A673 (cell line): ENCODE measurements at regions of chr2 and their contacts with region 1.

Region 1: DNA sequence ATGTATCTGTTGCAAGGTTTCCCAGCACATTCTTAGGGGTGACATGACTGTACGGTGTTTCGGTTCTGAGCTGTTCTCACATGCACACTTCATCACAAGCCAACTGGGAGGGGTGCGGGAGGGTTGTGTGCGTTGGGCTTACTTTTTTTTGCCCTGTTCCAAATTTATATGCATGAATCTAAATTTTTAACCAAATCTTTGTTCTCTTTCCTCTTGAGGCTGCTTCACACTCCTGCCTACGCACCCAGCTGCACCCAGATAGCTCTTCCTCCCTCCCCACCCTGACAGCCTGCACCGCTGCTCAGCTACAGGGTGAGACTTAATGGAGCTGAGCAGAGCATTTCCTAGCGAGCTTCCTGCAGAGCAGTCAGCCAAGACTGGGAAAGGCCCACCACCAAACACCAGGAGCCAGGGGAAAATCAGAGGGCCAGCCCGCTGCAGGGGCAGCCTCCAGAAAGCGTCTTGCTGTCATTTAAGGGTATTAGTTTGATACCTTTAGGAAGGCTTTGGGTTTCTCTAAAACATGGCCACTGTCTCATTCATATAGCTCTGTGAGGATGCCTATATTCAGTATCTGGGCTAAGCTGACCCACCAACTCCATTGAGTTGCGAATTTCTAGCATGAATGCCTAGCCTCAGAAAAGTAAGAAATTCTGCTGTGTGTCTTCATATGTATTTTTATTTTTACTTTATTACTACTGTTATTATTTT is 84.5 kb downstream of the POU3F3 start:
- DNase-seq: peak; percentile 8
- H3K4me3 ChIP-seq: no peak overlapping the region
- H3K27ac ChIP-seq: no peak overlapping the region
- H3K4me1 ChIP-seq: peaks cover 19% of the 10 kb centered on the region
- H3K27me3 ChIP-seq: no peaks in the 10 kb centered on the region
- CTCF ChIP-seq: no peak

Region 2: DNA sequence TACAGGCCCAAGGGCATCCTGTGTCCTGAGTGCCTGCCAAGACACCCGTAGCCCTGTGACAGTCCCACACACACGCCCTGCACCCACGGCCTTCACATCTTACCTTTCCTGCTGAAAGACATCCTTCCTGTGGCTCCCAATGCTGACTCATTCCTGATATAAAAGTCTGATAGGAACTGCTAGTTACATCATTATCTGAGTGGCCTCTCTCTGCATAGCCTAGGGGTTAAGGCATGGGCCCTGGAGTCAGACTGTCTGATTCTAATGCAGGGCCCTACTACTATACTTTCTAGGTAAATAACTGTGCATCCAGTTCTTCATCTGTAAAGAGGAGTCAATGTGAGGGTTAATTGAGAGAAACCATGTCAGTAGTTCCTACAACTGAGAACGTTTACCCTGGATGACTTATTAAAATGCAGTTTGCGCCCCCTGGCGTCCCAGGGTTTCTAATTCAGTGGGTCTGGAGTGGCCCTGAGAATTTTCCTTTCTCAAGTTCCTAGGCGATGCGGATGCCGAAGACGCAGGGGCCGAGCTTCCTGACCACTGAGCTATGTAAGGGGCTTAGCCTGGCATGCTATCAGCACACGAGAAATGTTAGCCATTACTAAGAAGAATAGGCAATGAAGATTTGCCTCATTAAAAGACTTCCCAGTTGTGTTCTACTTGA is 297.1 kb after region 1 on chr2:
- CTCF ChIA-PET with region 1: no interaction called
- POLR2A ChIA-PET with region 1: no interaction called
- intact Hi-C with region 1: loop called (anchors 10 kb)
- DNase-seq: peak; percentile 87
- H3K4me3 ChIP-seq: no peak overlapping the region
- H3K27ac ChIP-seq: no peak overlapping the region
- H3K4me1 ChIP-seq: no peaks in the 10 kb centered on the region
- H3K27me3 ChIP-seq: no peaks in the 10 kb centered on the region
- CTCF ChIP-seq: peak; percentile 83